Cardiac septum (tissue), 1 donor: ENCODE measurements at regions of chr12 and their contacts with region 1.

Region 1: GRCh38 chr12:47753034-47754001 is 5.4 kb downstream of the RAPGEF3 start:
- DNase-seq: peak; percentile 91

Region 2: DNA sequence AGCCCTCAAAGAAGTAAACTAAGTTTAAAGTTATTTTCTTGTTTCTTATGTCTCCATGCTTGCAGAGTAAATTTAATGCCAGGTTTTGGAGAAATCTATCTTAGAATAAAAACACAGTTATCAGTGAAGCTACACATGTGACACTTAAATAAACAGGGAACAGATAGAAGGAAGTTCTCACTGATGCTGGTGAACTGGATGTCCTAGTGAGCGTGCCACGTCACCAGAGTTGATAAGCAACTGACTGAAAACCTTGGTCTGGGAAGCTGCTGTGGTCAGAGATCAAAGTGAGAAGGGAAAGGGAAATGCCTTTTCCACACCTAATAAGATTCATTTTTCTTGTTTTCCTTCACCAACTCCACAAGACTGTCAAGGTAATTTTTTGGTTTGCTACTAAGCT is 748.7 kb before region 1 on chr12:
- intact Hi-C with region 1: no loop called
- DNase-seq: no peak

Region 3: GRCh38 chr12:47672068-47672467 is 81.2 kb before region 1 on chr12:
- intact Hi-C with region 1: no loop called
- DNase-seq: no peak

Region 4: DNA sequence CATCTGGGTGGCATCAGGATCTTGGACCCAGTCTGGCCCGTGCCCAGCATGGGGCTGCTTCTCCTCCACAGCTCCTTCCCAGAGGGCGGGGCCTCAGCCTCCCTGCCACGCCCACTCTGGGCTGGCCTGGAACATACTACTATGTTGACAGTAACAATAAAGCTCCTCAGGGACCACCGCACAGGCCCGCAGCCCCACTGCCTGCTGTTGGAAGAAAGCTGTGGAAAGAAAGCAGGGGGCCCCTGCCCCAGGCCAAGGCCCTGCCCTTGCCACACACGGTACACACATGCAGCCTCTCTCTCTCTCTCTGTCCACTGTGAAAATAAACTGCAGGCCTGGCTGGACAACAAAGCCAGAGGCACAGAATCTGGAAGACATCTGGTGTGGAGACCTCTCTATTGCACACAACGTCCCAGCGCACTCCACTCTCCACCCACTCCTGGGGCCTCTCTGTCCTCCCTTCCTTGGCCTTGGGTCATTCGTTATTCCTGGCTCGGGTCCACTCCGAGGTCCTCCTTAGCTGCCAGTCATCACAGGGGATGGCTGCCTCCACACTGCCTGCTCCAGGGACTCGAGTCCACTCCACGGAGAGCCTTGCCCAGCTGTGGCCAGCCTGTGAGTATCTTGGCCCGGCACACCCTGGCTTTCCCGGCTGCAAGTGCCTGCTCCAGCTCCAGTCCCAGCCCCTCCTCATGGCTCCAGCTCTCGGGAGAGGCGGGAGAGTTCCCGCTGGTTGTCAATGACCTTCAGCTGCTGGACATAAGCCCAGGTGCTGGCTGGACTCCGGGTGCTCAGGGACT is 16.2 kb before region 1 on chr12:
- intact Hi-C with region 1: loop called (anchors 1 kb)
- DNase-seq: peak; percentile 90

Region 5: DNA sequence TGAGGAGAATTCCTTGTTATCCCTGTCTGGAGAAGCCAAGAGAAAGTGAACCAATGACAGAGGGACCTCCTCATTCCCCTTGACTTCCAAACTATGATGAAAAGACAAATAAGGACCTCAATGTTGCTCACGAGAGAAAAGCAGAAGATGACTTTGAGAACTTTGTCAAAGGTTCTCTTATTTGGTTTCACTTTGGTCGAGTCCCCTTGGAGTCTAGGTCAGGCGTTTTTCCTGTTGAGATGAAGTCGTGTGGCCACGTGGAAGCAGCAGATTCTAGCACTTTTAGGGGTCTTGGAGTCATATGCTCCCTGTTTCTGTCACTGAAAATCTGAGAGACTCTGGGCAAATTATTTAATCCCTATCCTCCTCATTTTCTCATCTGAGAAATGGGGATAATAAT is 284.8 kb after region 1 on chr12:
- intact Hi-C with region 1: no loop called
- DNase-seq: no peak